ENCODE measurements at regions of chr2 and their contacts with region 1.

Region 1: GRCh38 chr2:11129598-11130449 is 25.4 kb upstream of the SLC66A3 start:
- DNase-seq: peak; percentile 86 to 94
- H3K4me3 ChIP-seq: peak overlapping the region; percentile 40 to 52 (median 49)
- H3K27ac ChIP-seq: peak overlapping the region; percentile 70 to 80 (median 72)
- H3K4me1 ChIP-seq: peaks cover 24 to 56% (median 35%) of the 10 kb centered on the region in 4 donors
- H3K27me3 ChIP-seq: no peaks in the 10 kb centered on the region
- CTCF ChIP-seq: peak in 5 of 7 experiments; percentile 22 to 60 (median 24)
- EP300 ChIP-seq: no peak
- POLR2A ChIP-seq: no peak

Region 2: GRCh38 chr2:11073251-11073650 is 56.6 kb before region 1 on chr2:
- intact Hi-C with region 1: no loop called
- DNase-seq: peak; percentile 42 to 71
- H3K4me3 ChIP-seq: no peak overlapping the region
- H3K27ac ChIP-seq: no peak overlapping the region
- H3K4me1 ChIP-seq: peaks cover 0 to 12% (median 0%) of the 10 kb centered on the region in 4 donors
- H3K27me3 ChIP-seq: peaks cover 0 to 22% (median 0%) of the 10 kb centered on the region in 3 donors
- CTCF ChIP-seq: peak in 3 of 7 experiments; percentile 11 to 18 (median 16)
- EP300 ChIP-seq: no peak
- POLR2A ChIP-seq: no peak

Region 3: GRCh38 chr2:11446733-11447248 is 317.0 kb after region 1 on chr2:
- intact Hi-C with region 1: loop called (anchors 10 kb)
- DNase-seq: peak; percentile 48 to 88
- H3K4me3 ChIP-seq: no peak overlapping the region
- H3K27ac ChIP-seq: no peak overlapping the region
- H3K4me1 ChIP-seq: no peaks in the 10 kb centered on the region
- H3K27me3 ChIP-seq: no peaks in the 10 kb centered on the region
- CTCF ChIP-seq: peak in 5 of 7 experiments; percentile 22 to 80 (median 65)
- EP300 ChIP-seq: no peak
- POLR2A ChIP-seq: no peak

Region 4: DNA sequence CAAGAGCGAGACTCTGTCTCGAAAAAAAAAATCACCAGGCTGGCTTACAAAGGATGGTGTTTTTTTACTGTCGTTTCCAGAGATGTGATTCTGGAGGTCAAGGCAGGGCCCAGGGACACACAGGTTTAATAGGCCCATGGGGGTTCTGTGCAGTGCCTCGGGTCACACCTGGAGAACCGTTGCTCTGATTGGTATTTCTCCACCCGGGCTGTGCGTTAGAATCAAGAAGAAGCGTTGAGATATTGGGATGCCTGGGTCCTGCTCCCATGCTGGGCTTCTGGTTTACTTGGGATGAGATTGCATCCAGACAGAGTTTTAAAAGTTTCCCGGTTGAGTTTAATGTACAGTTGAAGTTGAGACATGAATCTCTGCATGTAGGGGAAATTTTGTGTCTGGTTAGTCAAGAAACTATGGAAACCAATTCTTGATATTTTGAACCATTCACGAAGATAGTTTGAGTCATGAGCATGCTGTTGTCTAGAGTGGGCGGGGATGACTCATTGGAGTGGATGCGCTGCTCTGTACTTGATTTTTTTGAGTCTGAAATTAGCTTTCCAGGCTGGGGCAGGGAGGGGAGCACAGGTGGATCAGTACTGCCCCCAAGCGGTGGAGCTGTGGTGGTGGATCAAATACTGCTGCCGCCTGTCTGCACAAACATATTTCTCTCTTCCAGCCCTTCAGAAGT is 454.2 kb after region 1 on chr2:
- intact Hi-C with region 1: loop called (anchors 10 kb)
- DNase-seq: peak; percentile 71 to 90
- H3K4me3 ChIP-seq: no peak overlapping the region
- H3K27ac ChIP-seq: peak overlapping the region in 4 of 5 donors; percentile 31 to 70 (median 60)
- H3K4me1 ChIP-seq: peaks cover 0 to 24% (median 16%) of the 10 kb centered on the region in 4 donors
- H3K27me3 ChIP-seq: no peaks in the 10 kb centered on the region
- CTCF ChIP-seq: peak in 6 of 7 experiments; percentile 22 to 83 (median 78)
- EP300 ChIP-seq: no peak
- POLR2A ChIP-seq: no peak

Measured in stomach (tissue), 19 donors.